WTC11 (cell line): ENCODE measurements at regions of chr9 and their contacts with region 1.

Region 1: DNA sequence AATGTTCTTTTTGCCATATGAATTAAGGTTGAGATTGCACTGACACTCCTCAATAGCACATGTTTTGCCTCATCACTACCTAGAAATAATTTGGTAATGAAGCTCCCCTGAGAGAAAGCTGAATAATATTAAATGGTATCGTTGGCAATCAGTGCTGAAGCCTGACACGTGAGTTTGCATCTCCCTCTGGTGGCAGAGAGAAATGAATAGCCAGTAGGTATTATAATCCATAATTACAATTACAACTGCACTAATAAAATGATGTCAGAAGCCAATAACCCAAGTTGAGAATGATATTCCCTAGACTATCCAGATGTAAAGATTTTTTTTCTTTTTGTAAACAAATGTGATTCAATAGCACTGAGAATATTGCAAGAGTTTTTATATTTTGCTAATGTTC is 700.3 kb downstream of the PTPRD start:
- DNase-seq: no peak
- ATAC-seq: no peak
- H3K4me3 Mint-ChIP-seq: no peak overlapping the region
- H3K27ac Mint-ChIP-seq: no peak overlapping the region
- H3K4me1 Mint-ChIP-seq: peaks cover 11% of the 10 kb centered on the region
- H3K27me3 Mint-ChIP-seq: no peaks in the 10 kb centered on the region
- CTCF ChIP-seq: no peak

Region 2: DNA sequence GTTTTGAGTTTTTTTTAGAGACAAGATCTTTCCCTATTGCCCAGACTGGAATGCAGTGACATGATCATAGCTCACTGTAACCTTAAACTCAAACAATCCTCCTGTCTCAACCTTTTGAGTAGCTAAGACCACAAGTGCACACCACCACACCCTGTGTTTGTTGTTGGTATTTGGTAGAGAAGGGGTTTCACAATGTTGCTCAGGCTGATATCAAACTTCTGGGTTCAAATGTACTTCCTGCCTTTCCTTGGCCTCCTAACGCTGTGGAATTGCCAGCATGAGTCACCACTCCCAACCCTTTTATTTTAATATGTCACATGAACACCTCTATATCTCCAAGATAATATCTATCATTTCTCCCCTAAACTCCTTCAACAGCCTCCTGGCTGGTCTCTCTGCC is 18.6 kb before region 1 on chr9:
- CTCF ChIA-PET with region 1: interaction called, 10 read pairs
- POLR2A ChIA-PET with region 1: no interaction called
- DNase-seq: no peak
- ATAC-seq: no peak
- H3K4me3 Mint-ChIP-seq: no peak overlapping the region
- H3K27ac Mint-ChIP-seq: no peak overlapping the region
- H3K4me1 Mint-ChIP-seq: peaks cover 6% of the 10 kb centered on the region
- H3K27me3 Mint-ChIP-seq: no peaks in the 10 kb centered on the region
- CTCF ChIP-seq: no peak

Region 3: DNA sequence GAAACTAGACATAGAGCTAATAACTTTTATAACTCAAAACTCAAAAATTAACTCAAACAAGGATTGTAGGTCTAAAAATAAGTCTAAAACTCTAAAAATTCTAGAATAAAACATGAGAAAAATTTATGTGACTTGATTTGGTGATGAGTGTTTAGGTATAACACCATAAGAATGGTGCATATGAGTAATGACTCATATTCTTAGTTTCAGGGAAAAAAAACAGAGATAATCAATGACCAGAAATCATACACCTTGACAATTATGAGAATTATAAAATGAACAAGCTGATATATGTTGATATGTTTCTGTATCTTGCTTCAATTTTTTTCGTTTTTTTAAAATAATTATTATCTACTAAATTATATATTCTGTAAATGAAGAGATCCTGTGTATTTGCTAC is 159.1 kb after region 1 on chr9:
- CTCF ChIA-PET with region 1: no interaction called
- POLR2A ChIA-PET with region 1: no interaction called
- DNase-seq: no peak
- ATAC-seq: no peak
- H3K4me3 Mint-ChIP-seq: no peak overlapping the region
- H3K27ac Mint-ChIP-seq: no peak overlapping the region
- H3K4me1 Mint-ChIP-seq: no peaks in the 10 kb centered on the region
- H3K27me3 Mint-ChIP-seq: no peaks in the 10 kb centered on the region
- CTCF ChIP-seq: no peak